HepG2 (cell line): ENCODE measurements at regions of chrX and their contacts with region 1.

Region 1: GRCh38 chrX:103475381-103475780 is 43.9 kb downstream of the RAB40A start:
- DNase-seq: no peak
- ATAC-seq: no peak
- H3K4me3 ChIP-seq: no peak overlapping the region
- H3K27ac ChIP-seq: no peak overlapping the region
- H3K4me1 ChIP-seq: no peaks in the 10 kb centered on the region
- H3K27me3 ChIP-seq: no peaks in the 10 kb centered on the region
- CTCF ChIP-seq: no peak
- EP300 ChIP-seq: no peak
- POLR2A ChIP-seq: no peak
- RAD21 ChIP-seq: no peak

Region 2: DNA sequence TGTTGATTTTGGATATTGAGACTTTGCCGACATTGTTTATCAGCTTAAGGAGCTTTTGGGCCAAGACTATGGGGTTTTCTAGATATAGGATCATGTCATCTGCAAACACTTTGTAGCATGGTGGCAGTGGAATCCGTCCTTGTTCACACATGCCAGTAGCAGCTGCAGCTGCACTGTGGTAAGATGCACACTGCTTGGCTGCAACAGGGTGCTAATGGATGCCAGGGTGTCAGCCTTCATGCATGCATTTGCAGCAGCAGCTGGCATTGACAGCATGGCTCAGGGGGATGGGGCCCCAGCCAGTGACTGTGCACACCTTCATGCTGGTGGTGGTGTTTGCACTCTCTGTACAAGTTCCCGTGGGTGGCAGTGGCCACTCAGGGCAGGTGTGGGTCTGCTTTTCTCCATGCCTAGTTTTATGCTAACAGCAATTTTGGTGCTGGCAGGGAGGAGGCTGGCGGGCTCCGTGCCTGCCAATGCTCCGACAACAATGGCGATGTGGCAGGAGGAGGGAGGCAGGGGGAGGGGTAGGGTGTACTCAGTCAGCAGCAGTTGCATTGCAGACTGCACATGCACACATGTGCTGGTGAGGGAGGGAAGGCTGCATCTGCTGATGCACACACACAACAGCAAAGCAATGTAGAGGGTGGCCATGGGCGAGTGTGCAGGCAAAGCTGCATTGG is 61.5 kb before region 1 on chrX:
- CTCF ChIA-PET with region 1: no interaction called
- POLR2A ChIA-PET with region 1: no interaction called
- in situ Hi-C with region 1: loop called (anchors 10 kb)
- intact Hi-C with region 1: no loop called
- DNase-seq: no peak
- ATAC-seq: no peak
- H3K4me3 ChIP-seq: no peak overlapping the region
- H3K27ac ChIP-seq: no peak overlapping the region
- H3K4me1 ChIP-seq: no peaks in the 10 kb centered on the region
- H3K27me3 ChIP-seq: no peaks in the 10 kb centered on the region
- CTCF ChIP-seq: no peak
- EP300 ChIP-seq: no peak
- POLR2A ChIP-seq: no peak
- RAD21 ChIP-seq: no peak

Region 3: DNA sequence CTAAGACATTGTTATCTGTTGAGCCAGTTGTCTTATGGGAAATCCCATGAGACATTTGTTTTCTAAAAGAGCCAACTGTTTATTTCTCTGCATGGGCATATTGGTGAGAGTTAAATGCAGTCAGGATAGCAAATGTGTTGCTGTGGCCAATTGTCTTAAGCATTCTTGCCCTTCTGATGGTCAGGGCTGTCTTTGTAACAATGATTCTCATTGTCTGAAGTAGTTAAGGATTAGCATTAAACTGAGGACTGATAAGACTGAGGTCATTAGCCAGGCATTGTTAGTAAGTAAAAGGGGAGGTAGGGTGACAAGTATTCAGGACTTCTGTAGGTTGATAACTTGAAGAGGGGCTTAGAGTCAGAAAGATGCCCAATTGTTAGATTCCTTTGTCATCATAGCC is 222.3 kb after region 1 on chrX:
- CTCF ChIA-PET with region 1: no interaction called
- POLR2A ChIA-PET with region 1: no interaction called
- in situ Hi-C with region 1: no loop called
- intact Hi-C with region 1: no loop called
- DNase-seq: no peak
- ATAC-seq: no peak
- H3K4me3 ChIP-seq: no peak overlapping the region
- H3K27ac ChIP-seq: no peak overlapping the region
- H3K4me1 ChIP-seq: peaks cover 7% of the 10 kb centered on the region; the same call in 1 of the 2 replicates
- H3K27me3 ChIP-seq: no peaks in the 10 kb centered on the region
- CTCF ChIP-seq: no peak
- EP300 ChIP-seq: no peak
- POLR2A ChIP-seq: no peak
- RAD21 ChIP-seq: no peak